Natural killer cell (primary cell): ENCODE measurements at regions of chr2 and their contacts with region 1.

Region 1: GRCh38 chr2:181457121-181457740 is at the start of gene ITGA4:
- DNase-seq: peak; percentile 81 to 93
- ATAC-seq: peak; percentile 69 to 89 (median 79)
- H3K4me3 ChIP-seq: peak within 1 kb of the TSS; percentile 84
- H3K4me3 Mint-ChIP-seq: peak within 1 kb of the TSS; percentile 98
- H3K27ac ChIP-seq: peak within 1 kb of the TSS; percentile 99
- H3K27ac Mint-ChIP-seq: peak within 1 kb of the TSS; percentile 79 to 84
- H3K4me1 ChIP-seq: peaks cover 17% of the 10 kb centered on the region
- H3K4me1 Mint-ChIP-seq: peaks cover 59 to 67% of the 10 kb centered on the region in 2 donors
- H3K27me3 ChIP-seq: no peaks in the 10 kb centered on the region
- H3K27me3 Mint-ChIP-seq: no peaks in the 10 kb centered on the region
- CTCF ChIP-seq: peak; percentile 82
- total RNA-seq, gene ITGA4: 178 to 235 (median 189) TPM

Region 2: DNA sequence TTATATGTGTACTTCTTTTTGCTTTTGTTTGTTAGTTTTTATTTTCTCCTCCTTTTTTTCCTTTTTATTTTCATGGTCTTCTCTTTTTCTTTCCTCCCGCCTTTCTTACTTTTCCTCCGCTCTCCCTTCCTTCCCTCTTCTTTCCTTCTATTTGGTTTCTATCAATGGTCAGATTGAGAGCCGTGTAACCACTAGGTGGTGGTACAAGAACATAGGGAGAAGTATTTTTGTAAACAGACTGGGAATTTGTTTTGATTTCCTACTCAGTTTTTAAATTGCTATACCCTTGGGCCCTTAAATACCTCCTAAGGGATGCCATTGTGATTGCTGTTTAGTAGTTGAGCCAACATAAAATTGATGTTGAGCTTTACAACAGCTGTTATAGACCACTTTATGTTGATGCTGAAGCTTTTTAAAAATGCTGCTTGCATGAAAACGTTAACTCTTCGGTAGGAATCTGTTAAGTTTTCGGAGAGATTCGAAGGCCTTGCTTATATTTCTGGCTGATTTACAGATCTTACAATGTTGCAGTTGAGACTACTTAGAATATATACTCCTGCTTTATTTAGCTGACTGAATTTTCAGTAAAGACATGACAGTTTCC is 352.6 kb before region 1 on chr2:
- intact Hi-C with region 1: loop called (anchors 2 kb)
- DNase-seq: peak in 1 of 2 donors; percentile 81
- ATAC-seq: peak in 2 of 3 donors; percentile 66 to 75
- H3K4me3 ChIP-seq: no peak overlapping the region
- H3K4me3 Mint-ChIP-seq: no peak overlapping the region
- H3K27ac ChIP-seq: peak overlapping the region; percentile 29
- H3K27ac Mint-ChIP-seq: peak overlapping the region in 1 of 2 donors; percentile 6
- H3K4me1 ChIP-seq: peaks cover 6% of the 10 kb centered on the region
- H3K4me1 Mint-ChIP-seq: peaks cover 25 to 27% of the 10 kb centered on the region in 2 donors
- H3K27me3 ChIP-seq: no peaks in the 10 kb centered on the region
- H3K27me3 Mint-ChIP-seq: peaks cover 0 to 3% of the 10 kb centered on the region in 2 donors
- CTCF ChIP-seq: peak; percentile 89

Region 3: DNA sequence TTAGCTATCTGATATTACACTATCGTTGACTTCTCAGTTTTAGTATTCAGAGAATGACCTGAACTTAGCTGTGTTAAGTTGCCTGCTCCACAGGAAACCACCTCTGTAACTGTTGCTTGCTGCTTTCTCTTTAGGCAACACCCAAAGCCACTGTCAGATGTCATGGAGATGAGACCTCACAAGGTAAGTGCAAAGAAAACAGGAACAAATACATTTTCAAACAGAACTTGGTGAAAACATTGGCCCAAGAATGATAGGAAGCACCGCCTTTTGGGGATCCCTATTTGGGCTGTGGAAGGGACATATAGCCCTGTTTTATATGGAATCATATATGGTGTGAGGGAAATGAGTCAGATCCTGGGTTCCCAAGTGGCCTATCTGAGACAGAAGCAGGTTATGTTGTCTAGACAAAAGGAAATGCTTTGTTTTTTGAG is 333.4 kb before region 1 on chr2:
- intact Hi-C with region 1: loop called (anchors 1 kb)
- DNase-seq: peak; percentile 39 to 91
- ATAC-seq: peak; percentile 89 to 98 (median 97)
- H3K4me3 ChIP-seq: no peak overlapping the region
- H3K4me3 Mint-ChIP-seq: peak overlapping the region; percentile 66
- H3K27ac ChIP-seq: peak overlapping the region; percentile 97
- H3K27ac Mint-ChIP-seq: peak overlapping the region; percentile 96 to 99
- H3K4me1 ChIP-seq: peaks cover 9% of the 10 kb centered on the region
- H3K4me1 Mint-ChIP-seq: peaks cover 61% of the 10 kb centered on the region in 2 donors
- H3K27me3 ChIP-seq: no peaks in the 10 kb centered on the region
- H3K27me3 Mint-ChIP-seq: no peaks in the 10 kb centered on the region
- CTCF ChIP-seq: no peak

Region 4: DNA sequence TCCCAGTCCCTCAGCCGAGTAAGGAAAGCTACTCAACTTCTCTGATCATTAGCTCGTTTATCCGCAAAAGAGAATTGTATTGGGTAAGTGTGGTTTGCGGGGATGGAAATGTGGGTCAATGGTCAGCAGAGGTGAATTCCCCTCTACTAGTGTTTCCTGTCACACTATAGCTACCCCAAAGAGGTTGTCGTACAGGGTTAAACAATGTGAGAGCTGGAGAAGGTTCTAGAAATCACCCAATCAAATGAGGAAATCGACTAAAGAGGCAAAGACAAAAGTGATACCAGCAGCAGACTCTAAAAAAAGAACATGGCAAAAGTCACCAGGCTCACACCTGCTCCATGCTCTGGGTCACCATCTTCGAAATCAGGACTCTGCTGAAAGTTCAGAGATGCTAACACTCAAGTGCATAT is 144.7 kb before region 1 on chr2:
- intact Hi-C with region 1: loop called (anchors 1 kb)
- DNase-seq: peak; percentile 41 to 69
- ATAC-seq: peak; percentile 68 to 80 (median 77)
- H3K4me3 ChIP-seq: no peak overlapping the region
- H3K4me3 Mint-ChIP-seq: peak overlapping the region; percentile 82
- H3K27ac ChIP-seq: peak overlapping the region; percentile 84
- H3K27ac Mint-ChIP-seq: peak overlapping the region; percentile 88 to 89
- H3K4me1 ChIP-seq: peaks cover 21% of the 10 kb centered on the region
- H3K4me1 Mint-ChIP-seq: peaks cover 45 to 53% of the 10 kb centered on the region in 2 donors
- H3K27me3 ChIP-seq: no peaks in the 10 kb centered on the region
- H3K27me3 Mint-ChIP-seq: no peaks in the 10 kb centered on the region
- CTCF ChIP-seq: no peak

Region 5: GRCh38 chr2:181393472-181393871 is 63.8 kb before region 1 on chr2:
- intact Hi-C with region 1: loop called (anchors 1 kb)
- DNase-seq: peak in 1 of 2 donors; percentile 66
- ATAC-seq: peak; percentile 57 to 79 (median 65)
- H3K4me3 ChIP-seq: peak overlapping the region; percentile 53
- H3K4me3 Mint-ChIP-seq: peak overlapping the region; percentile 95
- H3K27ac ChIP-seq: peak overlapping the region; percentile 99
- H3K27ac Mint-ChIP-seq: peak overlapping the region; percentile 92 to 98
- H3K4me1 ChIP-seq: peaks cover 8% of the 10 kb centered on the region
- H3K4me1 Mint-ChIP-seq: peaks cover 21 to 27% of the 10 kb centered on the region in 2 donors
- H3K27me3 ChIP-seq: no peaks in the 10 kb centered on the region
- H3K27me3 Mint-ChIP-seq: no peaks in the 10 kb centered on the region
- CTCF ChIP-seq: no peak

Region 6: DNA sequence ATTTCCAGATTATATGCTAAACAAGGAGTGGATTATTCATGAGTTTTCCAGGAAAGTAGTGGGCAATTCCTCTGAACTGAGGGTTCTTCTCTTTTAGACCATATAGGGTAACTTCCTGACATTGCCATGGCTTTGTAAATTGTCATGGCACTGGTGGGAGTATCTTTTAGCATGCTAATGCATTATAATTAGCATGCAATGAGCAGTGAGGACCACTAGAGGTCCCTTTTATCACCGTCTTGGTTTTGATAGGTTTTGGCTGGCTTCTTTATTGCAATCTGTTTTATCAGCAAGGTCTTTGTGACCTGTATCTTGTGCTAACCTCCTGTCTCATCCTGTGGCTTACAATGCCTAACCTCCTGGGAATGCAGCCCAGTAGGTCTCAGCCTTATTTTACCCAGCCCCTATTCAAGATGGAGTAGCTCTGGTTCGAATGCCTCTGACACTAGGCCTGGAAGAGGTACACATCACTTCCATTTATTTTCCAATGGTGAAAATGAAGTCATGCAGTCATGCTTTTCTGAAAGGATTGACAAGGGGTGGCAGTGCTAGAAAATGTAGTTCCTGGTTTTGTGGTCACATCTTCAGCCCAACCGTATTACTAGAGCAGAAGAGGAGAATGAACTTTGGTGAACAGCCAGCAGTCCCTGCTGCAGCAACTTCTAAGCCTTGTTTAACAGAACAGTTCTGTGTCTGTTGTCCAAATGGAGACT is 26.7 kb before region 1 on chr2:
- intact Hi-C with region 1: loop called (anchors 2 kb)
- DNase-seq: peak in 1 of 2 donors; percentile 67
- ATAC-seq: peak; percentile 79 to 92 (median 80)
- H3K4me3 ChIP-seq: no peak overlapping the region
- H3K4me3 Mint-ChIP-seq: peak overlapping the region; percentile 26
- H3K27ac ChIP-seq: peak overlapping the region; percentile 16
- H3K27ac Mint-ChIP-seq: peak overlapping the region; percentile 61 to 67
- H3K4me1 ChIP-seq: peaks cover 8% of the 10 kb centered on the region
- H3K4me1 Mint-ChIP-seq: peaks cover 18 to 23% of the 10 kb centered on the region in 2 donors
- H3K27me3 ChIP-seq: no peaks in the 10 kb centered on the region
- H3K27me3 Mint-ChIP-seq: no peaks in the 10 kb centered on the region
- CTCF ChIP-seq: peak; percentile 70